ENCODE measurements at regions of chr19 and their contacts with region 1.

Region 1: DNA sequence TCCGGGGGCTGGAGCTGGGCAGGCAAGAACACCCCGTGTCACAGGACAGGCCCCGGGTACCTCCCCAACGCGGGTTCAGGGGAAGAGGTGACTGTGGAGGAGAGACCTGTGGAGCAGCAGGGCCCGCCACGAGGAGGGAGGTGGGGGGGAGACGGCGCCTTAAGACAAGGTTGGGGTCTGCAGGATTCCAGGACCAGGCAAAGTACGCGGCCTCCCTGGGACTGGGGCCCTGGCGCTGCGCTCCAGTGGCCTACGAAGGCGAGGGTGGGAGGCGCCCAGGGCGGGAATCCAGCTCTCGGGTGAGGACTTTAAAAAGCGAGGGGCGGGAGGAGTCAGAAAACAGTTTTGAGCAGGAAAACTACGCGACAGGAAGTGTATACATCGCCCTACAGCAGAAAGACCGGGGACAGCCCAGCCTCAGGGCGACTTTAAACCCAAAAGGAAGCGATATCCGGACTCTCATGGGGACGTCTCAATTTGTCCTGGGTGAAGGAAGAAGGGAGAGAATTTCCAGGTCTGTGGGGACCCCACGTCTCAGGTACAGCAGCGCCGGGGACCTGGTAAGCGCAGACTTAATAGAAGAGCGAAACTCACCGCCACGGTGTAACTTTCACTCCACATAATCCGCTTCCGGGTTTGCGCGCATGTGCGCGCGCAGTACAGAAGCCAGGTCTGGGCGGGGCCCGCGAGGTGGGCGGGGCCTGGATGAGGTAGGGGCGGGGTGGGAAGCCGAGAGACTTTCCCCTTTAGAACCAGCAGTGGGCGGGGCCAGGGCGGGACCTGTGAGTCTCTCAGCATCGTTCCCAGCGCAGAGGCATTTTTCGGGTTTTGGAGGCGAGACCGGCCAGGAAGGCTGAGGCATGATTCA is at the start of gene ZNF83:
- DNase-seq: peak; percentile 98
- H3K4me3 Mint-ChIP-seq: peak within 1 kb of the TSS; percentile 76
- H3K27ac Mint-ChIP-seq: peak within 1 kb of the TSS; percentile 90
- H3K4me1 Mint-ChIP-seq: peaks cover 10% of the 10 kb centered on the region
- H3K27me3 Mint-ChIP-seq: no peaks in the 10 kb centered on the region
- CTCF ChIP-seq: no peak
- total RNA-seq, gene ZNF83: 58.9 and 102 TPM in 2 replicates

Region 2: DNA sequence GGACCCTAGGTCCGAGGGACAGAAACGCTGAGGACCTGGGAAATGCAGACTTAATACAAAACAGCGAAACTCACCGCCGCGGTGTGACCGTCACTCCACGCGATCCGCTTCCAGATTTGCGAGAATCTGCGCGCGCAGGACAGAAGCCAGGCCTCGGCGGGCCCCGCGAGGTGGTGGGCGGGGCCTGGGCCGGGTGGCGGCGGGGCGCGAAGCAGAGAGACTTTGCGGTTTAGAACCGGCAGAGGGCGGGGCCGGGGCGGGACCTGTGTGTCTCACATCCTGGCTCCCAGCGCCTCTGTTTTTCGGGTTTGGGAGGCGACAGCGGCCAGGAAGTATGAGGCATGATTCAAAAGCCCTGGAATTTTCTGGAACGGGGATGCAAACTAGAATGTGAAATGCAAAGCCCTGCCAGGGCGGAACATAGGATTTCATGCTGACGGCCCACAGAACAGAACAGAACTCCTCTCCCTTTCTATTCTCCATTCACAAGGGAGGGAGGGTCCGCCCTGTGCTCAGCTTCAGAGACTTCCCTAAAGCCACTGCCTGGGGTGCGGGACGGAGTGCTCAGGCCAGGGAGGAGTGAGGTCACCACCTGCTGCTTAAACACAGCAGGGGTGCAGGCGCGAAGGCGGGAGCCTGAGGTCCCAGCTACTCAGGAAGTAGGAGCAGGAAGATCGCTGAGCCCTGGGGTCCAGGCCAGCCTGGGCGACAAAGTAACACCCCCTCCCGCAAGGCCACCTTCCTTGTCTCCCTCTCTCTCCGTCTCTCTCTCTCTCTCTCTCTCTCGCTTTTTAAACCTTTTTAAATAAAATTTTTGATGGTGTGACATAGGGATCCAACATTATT is 52.6 kb after region 1 on chr19:
- CTCF ChIA-PET with region 1: interaction called, 4 read pairs
- POLR2A ChIA-PET with region 1: interaction called, 4 read pairs
- intact Hi-C with region 1: loop called (anchors 1 kb)
- DNase-seq: peak; percentile 97
- H3K4me3 Mint-ChIP-seq: peak overlapping the region; percentile 97
- H3K27ac Mint-ChIP-seq: peak overlapping the region; percentile 90
- H3K4me1 Mint-ChIP-seq: peaks cover 25% of the 10 kb centered on the region
- H3K27me3 Mint-ChIP-seq: no peaks in the 10 kb centered on the region
- CTCF ChIP-seq: no peak

Measured in MCF 10A (cell line).